ENCODE measurements at regions of chr1 and their contacts with region 1.

Region 1: DNA sequence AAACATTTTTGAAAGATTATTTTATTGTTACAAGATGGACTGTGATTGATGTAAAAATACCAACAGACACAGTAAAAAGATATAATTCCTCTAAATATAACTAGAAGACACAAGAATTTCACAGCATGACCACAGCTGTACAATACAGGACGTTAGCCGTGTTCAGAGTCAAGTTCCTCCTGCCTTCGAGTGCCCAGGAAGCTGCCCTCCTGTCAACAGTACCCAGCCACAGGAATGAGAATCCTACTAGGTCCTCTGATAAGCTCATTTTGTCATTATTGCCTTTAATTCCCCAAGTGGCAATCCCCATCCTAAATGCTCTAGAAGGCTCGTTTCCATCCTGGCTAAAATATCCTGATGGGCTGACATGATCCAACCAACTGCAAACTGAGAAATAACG is 16.4 kb upstream of the CAPN2 start:
- DNase-seq: no peak
- ATAC-seq: no peak
- H3K4me3 ChIP-seq: no peak overlapping the region
- H3K27ac ChIP-seq: no peak overlapping the region
- H3K4me1 ChIP-seq: peaks cover 0 to 15% (median under 1%) of the 10 kb centered on the region in 12 donors
- H3K27me3 ChIP-seq: no peaks in the 10 kb centered on the region
- CTCF ChIP-seq: no peak
- POLR2A ChIP-seq: no peak

Region 2: DNA sequence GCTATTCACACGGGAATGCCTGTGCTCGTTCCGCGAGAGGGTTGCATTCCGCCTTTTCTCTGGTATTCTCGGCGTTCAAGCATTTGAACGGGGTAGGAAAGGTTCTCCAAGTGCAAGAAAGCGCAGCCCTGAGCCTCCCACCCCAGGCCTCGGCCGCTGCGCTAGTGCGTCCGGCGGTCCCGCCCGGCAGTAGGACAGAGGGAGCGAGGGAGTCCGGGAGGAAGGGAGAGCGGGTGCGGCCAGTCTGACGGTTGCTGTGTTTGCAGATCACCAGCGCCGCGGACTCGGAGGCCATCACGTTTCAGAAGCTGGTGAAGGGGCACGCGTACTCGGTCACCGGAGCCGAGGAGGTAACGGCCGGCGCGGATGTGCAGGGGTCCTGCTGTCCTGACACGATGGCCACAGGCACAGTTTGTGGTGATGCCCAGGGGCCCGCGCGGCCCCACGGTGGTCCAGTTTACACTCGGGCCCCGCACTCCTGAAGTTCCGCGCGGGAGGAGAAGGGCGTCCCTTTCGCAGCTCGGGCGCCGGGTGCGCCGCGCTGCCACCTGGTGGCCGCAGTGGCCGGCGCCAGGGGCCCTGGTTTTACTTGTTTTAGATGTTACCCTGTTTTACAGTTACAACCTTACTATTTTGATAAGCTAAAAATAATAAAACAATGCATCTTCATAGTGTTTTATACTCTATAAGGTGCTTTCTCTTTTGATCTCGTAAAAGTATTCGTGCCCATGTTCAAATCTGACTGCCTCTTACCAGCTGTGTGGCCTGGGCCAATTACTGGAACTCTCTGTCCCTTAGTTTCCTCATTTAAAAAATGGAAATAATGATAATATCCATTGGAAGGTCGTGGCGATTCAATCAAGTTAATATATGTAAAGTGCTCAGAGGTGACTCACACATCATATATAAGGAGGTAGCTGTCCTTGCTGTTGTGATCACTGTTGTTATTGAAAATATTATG is 53.1 kb after region 1 on chr1:
- intact Hi-C with region 1: loop called in 7 of 10 experiments (anchors 1 to 5 kb)
- DNase-seq: peak; percentile 60 to 86 (median 69)
- ATAC-seq: peak; percentile 51 to 90 (median 84)
- H3K4me3 ChIP-seq: peak overlapping the region in 11 of 12 donors; percentile 29 to 71 (median 54)
- H3K27ac ChIP-seq: peak overlapping the region in 11 of 12 donors; percentile 45 to 84 (median 70)
- H3K4me1 ChIP-seq: peaks cover 3 to 30% (median 20%) of the 10 kb centered on the region in 12 donors
- H3K27me3 ChIP-seq: no peaks in the 10 kb centered on the region
- CTCF ChIP-seq: peak; percentile 93 to 99 (median 96)
- POLR2A ChIP-seq: no peak

Region 3: GRCh38 chr1:224052772-224053171 is 356.8 kb after region 1 on chr1:
- intact Hi-C with region 1: loop called in 4 of 10 experiments (anchors 5 to 10 kb)
- DNase-seq: no peak
- ATAC-seq: no peak
- H3K4me3 ChIP-seq: no peak overlapping the region
- H3K27ac ChIP-seq: no peak overlapping the region
- H3K4me1 ChIP-seq: peaks cover 0 to 6% (median 0%) of the 10 kb centered on the region in 12 donors
- H3K27me3 ChIP-seq: no peaks in the 10 kb centered on the region
- CTCF ChIP-seq: no peak
- POLR2A ChIP-seq: no peak

Region 4: GRCh38 chr1:224329842-224330753 is 634.2 kb after region 1 on chr1 and contains the start of gene NVL:
- intact Hi-C with region 1: loop called in 2 of 10 experiments (anchors 5 to 10 kb)
- DNase-seq: peak; percentile 85 to 90 (median 88)
- ATAC-seq: peak; percentile 93 to 98 (median 98)
- H3K4me3 ChIP-seq: peak within 1 kb of the TSS; percentile 51 to 98 (median 88)
- H3K27ac ChIP-seq: peak within 1 kb of the TSS; percentile 88 to 98 (median 92)
- H3K4me1 ChIP-seq: peaks cover 0 to 28% (median 20%) of the 10 kb centered on the region in 12 donors
- H3K27me3 ChIP-seq: no peaks in the 10 kb centered on the region
- CTCF ChIP-seq: peak in 1 of 12 donors; percentile 13
- POLR2A ChIP-seq: peak in 1 of 2 donors; percentile 56
- total RNA-seq, gene NVL: 4.8 to 14.8 (median 8.7) TPM

Measured in heart left ventricle (tissue), 16 donors.